Colonic mucosa (tissue), 4 donors: ENCODE measurements at regions of chr18 and their contacts with region 1.

Region 1: DNA sequence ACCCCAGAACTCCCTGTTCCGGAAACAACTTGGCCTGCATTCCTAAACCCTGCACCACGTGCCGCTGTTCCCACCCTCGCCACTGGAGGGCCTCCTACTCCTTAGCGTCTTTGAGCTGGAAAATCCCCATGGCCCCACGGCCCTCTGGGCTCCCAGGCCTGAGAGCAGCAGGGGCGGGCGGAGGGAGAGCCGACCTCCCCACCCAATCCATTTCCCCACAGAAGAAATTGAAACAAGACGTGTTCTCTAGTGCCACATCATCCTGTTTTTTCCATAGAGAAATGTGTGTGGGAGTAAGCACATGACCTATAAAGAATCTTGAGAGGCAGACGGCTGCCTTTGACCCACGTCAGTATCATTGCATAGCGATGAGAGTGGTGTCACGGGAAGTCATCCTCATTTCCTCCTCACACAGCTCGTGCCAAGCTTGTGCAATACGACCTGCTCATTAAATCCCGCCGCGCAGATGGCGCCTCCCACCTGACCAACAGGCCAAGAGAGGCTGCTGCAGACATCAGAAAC is 79.2 kb downstream of the LAMA1 start:
- DNase-seq: peak; percentile 62
- H3K4me3 ChIP-seq: no peak overlapping the region
- H3K27ac ChIP-seq: no peak overlapping the region
- H3K4me1 ChIP-seq: no peaks in the 10 kb centered on the region
- H3K27me3 ChIP-seq: no peaks in the 10 kb centered on the region
- CTCF ChIP-seq: no peak

Region 2: DNA sequence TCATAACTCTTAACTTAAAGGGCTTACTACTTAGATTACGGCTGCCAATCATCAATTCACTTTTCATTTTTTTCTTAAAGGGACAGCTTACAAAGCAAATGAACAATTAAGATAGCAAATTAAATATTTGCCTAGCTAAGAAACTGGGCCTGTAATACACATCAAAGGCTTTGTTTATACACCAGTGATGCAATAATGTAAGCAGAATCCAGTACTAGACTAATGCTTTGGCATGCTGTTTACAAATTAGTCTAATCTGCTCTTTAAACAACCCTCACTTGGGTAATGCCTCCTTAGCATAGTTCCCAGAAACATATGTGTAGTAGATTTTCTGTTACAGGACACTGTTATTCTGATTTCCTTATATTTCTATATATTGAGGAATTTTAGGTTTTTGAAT is 203.0 kb before region 1 on chr18:
- intact Hi-C with region 1: no loop called
- DNase-seq: no peak
- H3K4me3 ChIP-seq: no peak overlapping the region
- H3K27ac ChIP-seq: no peak overlapping the region
- H3K4me1 ChIP-seq: no peaks in the 10 kb centered on the region
- H3K27me3 ChIP-seq: no peaks in the 10 kb centered on the region
- CTCF ChIP-seq: no peak

Region 3: GRCh38 chr18:7177116-7177744 is 138.8 kb after region 1 on chr18:
- intact Hi-C with region 1: loop called (anchors 10 kb)
- DNase-seq: no peak
- H3K4me3 ChIP-seq: no peak overlapping the region
- H3K27ac ChIP-seq: no peak overlapping the region
- H3K4me1 ChIP-seq: no peaks in the 10 kb centered on the region
- H3K27me3 ChIP-seq: no peaks in the 10 kb centered on the region
- CTCF ChIP-seq: peak; percentile 52